K562 (cell line): ENCODE measurements at regions of chr17 and their contacts with region 1.

Region 1: GRCh38 chr17:58337600-58338453 is 9.2 kb upstream of the TSPOAP1 start:
- DNase-seq: peak; percentile 58 to 96 (median 75)
- ATAC-seq: peak; percentile 80
- H3K4me3 ChIP-seq: peak overlapping the region; percentile 91
- H3K27ac ChIP-seq: peak overlapping the region; percentile 99
- H3K4me1 ChIP-seq: peaks cover 62 to 71% of the 10 kb centered on the region in 2 experiments
- H3K27me3 ChIP-seq: no peaks in the 10 kb centered on the region
- CTCF ChIP-seq: 0 out of 6 replicates have a peak, but pooled peaks of 1 of the 3 experiments have one; percentile 12
- EP300 ChIP-seq: peak; percentile 74
- POLR2A ChIP-seq: peak; percentile 90
- RAD21 ChIP-seq: peak; percentile 3 to 6; a peak in 3 of 4 replicates

Region 2: GRCh38 chr17:58317421-58318064 is 20.3 kb before region 1 on chr17:
- CTCF ChIA-PET with region 1: no interaction called
- POLR2A ChIA-PET with region 1: interaction called, 10 read pairs
- in situ Hi-C with region 1: no loop called
- intact Hi-C with region 1: no loop called
- DNase-seq: peak in 2 of 4 experiments; percentile 58 to 59
- ATAC-seq: peak; percentile 86
- H3K4me3 ChIP-seq: no peak overlapping the region
- H3K27ac ChIP-seq: no peak overlapping the region
- H3K4me1 ChIP-seq: peaks cover 0 to 17% of the 10 kb centered on the region in 2 experiments; a peak in 3 of 5 replicates
- H3K27me3 ChIP-seq: no peaks in the 10 kb centered on the region
- CTCF ChIP-seq: peak; percentile 78 to 84 (median 79)
- EP300 ChIP-seq: no peak
- POLR2A ChIP-seq: no peak
- RAD21 ChIP-seq: peak; percentile 82 to 93

Region 3: GRCh38 chr17:58417300-58418092 is 79.7 kb after region 1 on chr17 and contains the start of gene RNF43:
- CTCF ChIA-PET with region 1: no interaction called
- POLR2A ChIA-PET with region 1: interaction called, 79 read pairs
- in situ Hi-C with region 1: loop called (anchors 5 kb)
- intact Hi-C with region 1: no loop called
- DNase-seq: peak; percentile 92 to 97 (median 94)
- ATAC-seq: peak; percentile 97
- H3K4me3 ChIP-seq: peak within 1 kb of the TSS; percentile 22
- H3K27ac ChIP-seq: peak within 1 kb of the TSS; percentile 37
- H3K4me1 ChIP-seq: peaks cover 3 to 8% of the 10 kb centered on the region in 2 experiments; a peak in 4 of 5 replicates
- H3K27me3 ChIP-seq: no peaks in the 10 kb centered on the region
- CTCF ChIP-seq: peak; percentile 90 to 93 (median 91)
- EP300 ChIP-seq: peak; percentile 50; the same call in 1 of the 2 replicates
- POLR2A ChIP-seq: peak; percentile 58
- RAD21 ChIP-seq: peak; percentile 93 to 96
- polyA plus RNA-seq, gene RNF43: 0.29 to 0.51 TPM

Region 4: GRCh38 chr17:58755577-58756245 is 417.9 kb after region 1 on chr17 and contains the start of gene PPM1E:
- CTCF ChIA-PET with region 1: no interaction called
- POLR2A ChIA-PET with region 1: no interaction called
- in situ Hi-C with region 1: no loop called
- intact Hi-C with region 1: no loop called
- DNase-seq: peak; percentile 81 to 88 (median 84)
- ATAC-seq: peak; percentile 89
- H3K4me3 ChIP-seq: peak within 1 kb of the TSS; percentile 70
- H3K27ac ChIP-seq: 0 out of 3 replicates have a peak within 1 kb of the TSS, but pooled peaks have one; percentile 26
- H3K4me1 ChIP-seq: peaks cover 6 to 14% of the 10 kb centered on the region in 2 experiments; a peak in 4 of 5 replicates
- H3K27me3 ChIP-seq: no peaks in the 10 kb centered on the region
- CTCF ChIP-seq: no peak
- EP300 ChIP-seq: no peak
- POLR2A ChIP-seq: no peak
- RAD21 ChIP-seq: no peak
- polyA plus RNA-seq, gene PPM1E: 1.0 to 1.8 TPM